Activated CD4-positive, alpha-beta T cell treated with anti-CD3 and anti-CD28 coated beads for 36 hours (primary cell): ENCODE measurements at regions of chr19 and their contacts with region 1.

Region 1: GRCh38 chr19:19663256-19664038 is at the start of gene ATP13A1:
- DNase-seq: peak; percentile 95
- ATAC-seq: peak; percentile 77
- H3K4me3 Mint-ChIP-seq: peak within 1 kb of the TSS; percentile 78
- H3K27ac Mint-ChIP-seq: peak within 1 kb of the TSS; percentile 98
- H3K4me1 Mint-ChIP-seq: peaks cover 35% of the 10 kb centered on the region
- H3K27me3 Mint-ChIP-seq: no peaks in the 10 kb centered on the region
- total RNA-seq, gene ATP13A1: 61.8 to 71.2 TPM

Region 2: DNA sequence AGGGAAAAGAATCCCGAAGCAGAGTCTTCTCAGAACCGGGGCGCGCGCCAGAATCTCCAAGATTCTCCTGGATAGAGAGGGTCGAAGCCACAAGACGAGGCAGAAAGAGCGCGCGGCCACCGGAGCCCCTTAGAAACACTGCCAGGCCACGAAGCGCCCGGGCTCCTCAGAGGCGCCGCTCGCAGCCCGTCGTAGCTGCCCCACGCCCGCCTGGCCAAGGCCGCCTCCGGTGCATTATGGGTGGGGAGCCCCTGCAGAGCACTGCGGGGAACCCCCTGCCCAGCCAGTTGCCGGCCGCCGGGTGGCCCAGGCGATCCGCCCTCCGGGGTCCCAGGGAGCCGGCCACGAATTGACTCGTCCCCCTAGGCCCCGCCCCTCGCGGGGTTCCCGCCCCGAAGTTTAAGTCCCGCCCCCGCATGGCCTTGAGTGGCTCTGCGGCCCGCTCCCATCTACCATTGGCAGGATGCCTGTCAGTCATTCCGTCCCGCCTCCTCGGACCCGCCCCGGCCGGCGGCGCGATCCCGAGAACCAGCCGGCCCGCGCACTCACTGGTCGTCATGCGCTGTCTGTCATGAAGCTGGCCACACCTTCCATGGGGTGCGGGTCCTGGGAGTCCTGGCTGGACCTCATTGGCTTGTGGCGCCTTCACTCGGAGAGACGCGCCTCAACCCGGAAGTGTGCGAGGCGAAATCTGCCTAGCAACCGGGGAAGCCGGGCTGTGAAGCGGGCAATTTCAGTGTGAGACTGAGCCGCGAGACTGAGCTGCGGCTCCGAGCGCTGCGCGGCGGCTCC is 278.1 kb before region 1 on chr19:
- CTCF ChIA-PET with region 1: no interaction called
- POLR2A ChIA-PET with region 1: no interaction called
- intact Hi-C with region 1: loop called in 1 of 2 experiments (anchors 1 kb)
- DNase-seq: peak; percentile 100
- ATAC-seq: peak; percentile 96
- H3K4me3 Mint-ChIP-seq: peak overlapping the region; percentile 86
- H3K27ac Mint-ChIP-seq: peak overlapping the region; percentile 78
- H3K4me1 Mint-ChIP-seq: peaks cover 36% of the 10 kb centered on the region
- H3K27me3 Mint-ChIP-seq: no peaks in the 10 kb centered on the region

Region 3: DNA sequence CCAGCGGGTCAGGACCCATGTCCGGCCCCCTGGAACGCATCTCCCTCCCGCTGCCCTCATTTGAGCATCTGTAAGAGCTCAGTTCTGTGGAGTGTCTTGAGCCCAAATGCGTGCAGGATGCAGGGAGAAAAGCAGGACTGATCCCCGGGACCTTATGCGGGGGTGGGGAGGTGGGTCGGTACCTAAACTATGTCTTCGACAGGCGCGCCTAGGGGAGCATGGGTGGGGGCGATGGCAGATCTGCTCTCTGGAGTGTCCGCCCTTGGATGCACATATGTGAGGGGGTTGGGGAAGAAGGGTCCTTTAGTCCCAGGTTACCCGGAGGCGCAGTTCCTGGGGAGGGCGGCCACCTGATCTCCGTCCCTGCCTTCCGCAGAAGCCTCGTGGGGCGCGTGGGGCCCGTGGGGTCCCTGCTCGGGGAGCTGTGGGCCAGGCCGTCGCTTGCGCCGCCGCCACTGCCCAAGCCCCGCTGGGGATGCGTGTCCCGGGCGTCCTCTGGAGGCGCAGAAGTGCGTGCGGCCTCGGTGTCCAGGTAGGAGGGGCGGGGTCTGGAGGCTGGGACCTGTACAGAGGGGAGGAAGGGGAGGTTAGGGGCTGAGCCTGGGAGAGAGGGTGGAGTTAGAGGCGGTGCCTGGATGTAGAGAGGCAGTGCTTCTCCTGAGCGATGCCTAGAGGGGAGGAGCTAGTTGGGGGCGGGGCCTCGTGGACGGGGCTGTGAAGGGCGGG is 122.6 kb before region 1 on chr19:
- CTCF ChIA-PET with region 1: no interaction called
- POLR2A ChIA-PET with region 1: interaction called, 6 read pairs
- intact Hi-C with region 1: loop called in 1 of 2 experiments (anchors 1 kb)
- DNase-seq: peak; percentile 93
- ATAC-seq: peak; percentile 94
- H3K4me3 Mint-ChIP-seq: peak overlapping the region; percentile 54
- H3K27ac Mint-ChIP-seq: no peak overlapping the region
- H3K4me1 Mint-ChIP-seq: peaks cover 29% of the 10 kb centered on the region
- H3K27me3 Mint-ChIP-seq: peaks cover 11% of the 10 kb centered on the region

Region 4: DNA sequence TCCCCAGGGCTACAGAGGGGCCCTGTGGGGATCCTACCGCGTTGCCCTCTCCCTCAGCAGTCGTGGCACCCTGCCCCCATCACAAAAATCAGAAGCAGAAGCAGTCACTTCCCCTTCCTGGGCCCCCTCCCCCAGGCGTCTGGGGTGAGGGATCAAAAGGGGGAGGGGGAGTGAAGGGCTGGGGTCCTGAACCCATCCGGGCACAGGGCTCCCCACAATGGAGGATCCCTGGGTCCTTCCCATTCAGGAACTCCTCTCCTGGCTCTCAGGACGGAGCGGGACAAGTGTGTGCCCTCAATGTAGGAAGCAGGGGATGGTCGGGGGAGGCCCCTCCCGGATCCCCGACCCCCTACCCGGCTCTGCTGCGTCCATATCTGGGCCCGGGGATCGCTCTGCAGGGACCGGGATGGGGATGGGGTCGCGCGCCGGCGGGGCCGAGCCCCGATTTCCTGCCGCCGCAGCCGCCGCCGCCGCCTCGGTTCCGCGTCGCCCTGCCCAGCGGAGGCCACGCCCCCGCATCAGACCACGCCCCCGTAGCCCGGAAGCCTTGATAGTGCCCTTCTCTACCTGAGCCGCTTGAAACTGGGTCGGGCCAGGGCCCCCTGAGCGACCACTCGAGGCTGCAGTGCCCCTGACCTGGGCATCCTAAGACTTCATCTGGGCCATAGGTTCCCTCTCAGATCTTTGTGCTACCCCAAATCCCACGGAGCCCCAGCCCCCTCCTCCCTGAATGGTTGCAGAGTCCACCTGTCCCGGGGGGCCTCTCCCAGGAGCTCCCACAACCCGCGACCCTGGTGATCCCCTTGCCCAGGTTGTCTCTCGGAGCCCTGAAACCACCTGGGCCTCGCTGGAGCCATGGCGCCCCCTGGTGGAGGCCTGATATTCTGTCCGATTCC is 20.0 kb before region 1 on chr19 and contains the start of gene GMIP:
- CTCF ChIA-PET with region 1: interaction called, 4 read pairs
- POLR2A ChIA-PET with region 1: no interaction called
- intact Hi-C with region 1: loop called in 1 of 2 experiments (anchors 1 kb)
- DNase-seq: peak; percentile 92
- ATAC-seq: peak; percentile 82
- H3K4me3 Mint-ChIP-seq: peak within 1 kb of the TSS; percentile 100
- H3K27ac Mint-ChIP-seq: peak within 1 kb of the TSS; percentile 96
- H3K4me1 Mint-ChIP-seq: peaks cover 10% of the 10 kb centered on the region
- H3K27me3 Mint-ChIP-seq: no peaks in the 10 kb centered on the region
- total RNA-seq, gene GMIP: 54.9 to 56.6 TPM

Region 5: DNA sequence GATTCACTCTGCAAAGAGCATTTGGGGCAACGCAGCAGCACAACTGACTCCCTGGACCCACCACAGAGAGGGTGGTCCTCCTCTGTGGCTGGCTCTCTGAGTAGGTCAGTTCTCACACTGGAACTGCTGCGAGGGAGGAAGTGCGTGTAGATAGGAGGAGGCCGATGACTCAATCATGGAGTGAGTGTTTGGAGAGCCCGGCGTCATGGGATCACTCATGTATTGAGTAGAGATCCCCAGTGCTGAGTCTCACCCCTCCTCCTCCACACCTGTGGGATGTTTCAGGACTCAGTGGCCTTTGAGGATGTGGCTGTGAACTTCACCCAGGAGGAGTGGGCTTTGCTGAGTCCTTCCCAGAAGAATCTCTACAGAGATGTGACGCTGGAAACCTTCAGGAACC is 14.1 kb after region 1 on chr19:
- CTCF ChIA-PET with region 1: no interaction called
- POLR2A ChIA-PET with region 1: no interaction called
- intact Hi-C with region 1: no loop called
- DNase-seq: no peak
- ATAC-seq: no peak
- H3K4me3 Mint-ChIP-seq: no peak overlapping the region
- H3K27ac Mint-ChIP-seq: peak overlapping the region; percentile 37
- H3K4me1 Mint-ChIP-seq: peaks cover 10% of the 10 kb centered on the region
- H3K27me3 Mint-ChIP-seq: no peaks in the 10 kb centered on the region

Region 6: DNA sequence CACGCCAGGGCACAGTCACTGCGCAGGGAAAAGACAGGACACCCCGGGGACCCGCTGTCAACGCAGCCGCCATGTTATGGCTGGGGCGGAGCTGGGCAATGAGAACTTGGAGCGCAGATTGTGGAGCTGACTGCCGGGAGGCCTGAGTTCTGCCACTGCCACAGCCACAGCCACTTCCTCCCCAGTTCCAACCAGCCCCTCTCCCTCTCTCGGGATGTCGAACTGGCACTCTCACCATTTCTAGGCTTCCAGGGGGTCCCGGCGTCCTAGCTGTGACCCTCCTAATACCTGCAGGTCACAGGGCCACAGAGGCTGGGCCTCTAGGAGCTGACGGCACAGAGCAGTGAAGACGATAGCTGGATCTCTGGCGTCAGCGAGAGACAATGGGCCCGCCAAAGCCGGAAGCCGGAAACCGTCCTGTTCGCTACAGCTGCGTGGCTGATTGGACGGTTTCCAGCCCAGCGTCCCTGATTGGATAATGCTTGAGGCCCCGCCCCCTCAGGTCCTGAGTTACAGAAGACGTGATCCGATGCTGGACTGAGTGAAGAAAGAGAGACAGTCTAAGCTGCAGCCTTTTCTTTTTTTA is 158.0 kb after region 1 on chr19 and contains the start of gene ZNF506:
- CTCF ChIA-PET with region 1: interaction called, 3 read pairs
- POLR2A ChIA-PET with region 1: interaction called, 6 read pairs
- intact Hi-C with region 1: loop called (anchors 1 kb)
- DNase-seq: peak; percentile 99
- ATAC-seq: peak; percentile 88
- H3K4me3 Mint-ChIP-seq: peak within 1 kb of the TSS; percentile 96
- H3K27ac Mint-ChIP-seq: peak within 1 kb of the TSS; percentile 99
- H3K4me1 Mint-ChIP-seq: peaks cover 43% of the 10 kb centered on the region
- H3K27me3 Mint-ChIP-seq: no peaks in the 10 kb centered on the region
- total RNA-seq, gene ZNF506: 33.3 to 41.3 TPM

Region 7: DNA sequence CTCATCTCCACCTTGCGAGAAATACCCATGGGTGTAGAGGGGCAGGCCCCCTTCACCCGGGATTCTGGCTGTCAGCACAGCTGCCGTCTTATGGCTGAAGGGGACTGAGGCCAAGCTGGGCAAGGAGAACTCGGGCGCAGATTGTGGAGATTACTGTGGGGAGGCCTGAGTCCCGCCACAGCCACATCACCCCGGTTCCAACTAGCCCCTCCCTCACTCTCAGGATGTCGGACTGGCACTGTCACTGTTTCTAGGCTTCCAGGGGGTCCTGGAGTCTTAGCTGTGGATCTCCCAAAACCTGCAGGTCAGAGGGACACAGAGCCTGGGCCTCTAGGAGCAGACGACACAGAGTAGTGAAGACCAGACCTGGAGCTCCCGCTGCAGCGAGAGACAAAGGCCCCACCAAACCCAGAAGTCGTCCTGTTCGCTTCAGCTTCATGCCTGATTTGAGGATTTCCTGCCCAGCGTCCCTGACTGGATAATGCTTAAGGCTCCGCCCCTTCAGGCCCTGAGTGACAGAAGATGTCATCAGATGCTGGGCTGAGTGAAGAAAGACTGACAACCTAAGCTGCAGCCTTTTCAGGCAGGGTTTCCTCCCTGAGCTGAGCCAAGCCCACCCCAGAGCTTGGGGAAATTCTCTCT is 293.1 kb after region 1 on chr19:
- CTCF ChIA-PET with region 1: interaction called, 3 read pairs
- POLR2A ChIA-PET with region 1: no interaction called
- intact Hi-C with region 1: loop called in 1 of 2 experiments (anchors 2 kb)
- DNase-seq: peak; percentile 24
- ATAC-seq: no peak
- H3K4me3 Mint-ChIP-seq: no peak overlapping the region
- H3K27ac Mint-ChIP-seq: no peak overlapping the region
- H3K4me1 Mint-ChIP-seq: no peaks in the 10 kb centered on the region
- H3K27me3 Mint-ChIP-seq: no peaks in the 10 kb centered on the region